Sciatic nerve (tissue), 2 donors: ENCODE measurements at regions of chr19 and their contacts with region 1.

Region 1: DNA sequence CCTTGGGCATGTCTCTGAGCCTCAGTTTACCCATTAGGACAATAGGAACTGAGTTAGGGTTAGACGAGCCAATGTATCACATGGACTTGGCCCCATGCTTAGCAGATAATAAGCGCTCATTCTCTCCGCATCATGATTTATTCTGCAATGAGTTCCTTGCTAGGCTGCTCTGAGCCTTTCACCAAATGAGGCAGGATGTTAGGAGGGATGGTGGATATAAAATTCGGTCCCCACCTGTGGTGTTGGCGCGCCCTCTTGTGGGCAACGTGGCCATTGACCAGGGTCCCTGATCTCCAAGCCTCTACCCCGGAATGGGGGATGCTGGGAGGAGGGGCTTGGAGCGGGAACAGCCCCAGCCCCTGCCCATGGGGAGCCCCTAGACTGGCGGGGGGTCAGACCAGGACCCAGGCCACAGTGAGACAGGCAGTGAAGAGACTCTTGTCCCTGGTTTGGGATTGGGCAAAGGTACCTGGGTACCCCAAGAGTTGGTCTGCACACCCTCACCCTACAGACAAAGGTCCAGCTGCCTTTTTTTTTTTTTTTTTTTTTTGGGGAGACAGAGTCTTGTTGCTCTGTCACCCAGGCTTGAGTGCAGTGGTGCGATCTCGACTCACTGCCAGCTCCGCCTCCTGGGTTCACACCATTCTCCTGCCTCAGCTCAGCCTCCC is 43.9 kb downstream of the CERS4 start:
- DNase-seq: peak; percentile 93
- ATAC-seq: peak; percentile 82

Region 2: DNA sequence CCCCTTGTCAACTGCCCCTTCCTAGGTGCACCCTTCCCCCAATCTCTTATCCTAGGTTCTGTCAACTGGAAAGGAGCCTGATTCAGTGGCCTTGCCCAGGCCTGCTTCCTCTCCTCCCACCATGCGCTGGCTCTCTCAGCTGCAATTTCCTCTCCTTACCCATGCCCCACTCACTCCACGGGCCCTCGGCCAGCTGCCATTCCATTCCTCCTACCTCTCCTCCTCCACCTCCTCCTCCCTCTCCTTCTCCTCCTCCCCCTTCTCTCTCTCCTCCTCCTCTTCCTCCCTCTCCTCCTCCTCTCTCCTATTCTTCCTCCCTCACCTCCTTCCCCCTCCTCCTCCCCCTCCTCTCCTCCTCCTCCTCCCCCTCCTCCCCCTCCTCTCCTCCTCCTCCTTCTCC is 300.0 kb before region 1 on chr19:
- intact Hi-C with region 1: loop called (anchors 10 kb)
- DNase-seq: no peak
- ATAC-seq: no peak

Region 3: GRCh38 chr19:8028951-8029491 is 224.0 kb before region 1 on chr19:
- intact Hi-C with region 1: no loop called
- DNase-seq: no peak
- ATAC-seq: peak; percentile 71

Region 4: DNA sequence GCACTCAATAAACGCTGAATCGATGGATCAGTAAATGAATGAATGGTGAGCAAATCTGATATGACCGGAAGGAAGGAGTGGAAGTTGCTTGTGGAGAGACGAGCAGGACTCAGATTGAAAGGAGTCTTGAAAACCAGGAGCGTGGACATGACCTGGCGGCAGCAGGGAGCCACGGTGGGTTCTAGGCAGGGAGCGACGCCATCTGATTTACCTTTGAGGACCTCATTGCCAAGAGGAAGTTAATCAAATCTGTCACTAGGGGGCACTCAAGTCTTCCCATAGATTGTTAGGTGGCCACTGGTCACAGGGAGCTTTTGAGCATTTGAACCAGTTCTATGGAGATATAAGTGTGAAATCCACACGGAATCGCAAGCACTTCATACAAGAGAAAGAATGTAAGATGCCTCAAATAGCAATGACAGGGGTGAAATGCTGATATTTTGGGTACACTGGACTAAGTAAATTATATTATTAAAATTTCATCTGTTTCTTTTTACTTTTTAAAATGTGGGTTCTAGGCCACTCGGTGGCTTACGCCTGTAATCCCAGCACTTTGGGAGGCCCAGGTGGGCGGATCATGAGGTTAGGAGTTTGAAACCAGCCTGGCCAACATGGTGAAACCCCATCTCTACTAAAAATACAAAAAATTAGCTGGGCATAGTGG is 94.5 kb before region 1 on chr19:
- intact Hi-C with region 1: loop called (anchors 5 kb)
- DNase-seq: no peak
- ATAC-seq: peak; percentile 57

Region 5: DNA sequence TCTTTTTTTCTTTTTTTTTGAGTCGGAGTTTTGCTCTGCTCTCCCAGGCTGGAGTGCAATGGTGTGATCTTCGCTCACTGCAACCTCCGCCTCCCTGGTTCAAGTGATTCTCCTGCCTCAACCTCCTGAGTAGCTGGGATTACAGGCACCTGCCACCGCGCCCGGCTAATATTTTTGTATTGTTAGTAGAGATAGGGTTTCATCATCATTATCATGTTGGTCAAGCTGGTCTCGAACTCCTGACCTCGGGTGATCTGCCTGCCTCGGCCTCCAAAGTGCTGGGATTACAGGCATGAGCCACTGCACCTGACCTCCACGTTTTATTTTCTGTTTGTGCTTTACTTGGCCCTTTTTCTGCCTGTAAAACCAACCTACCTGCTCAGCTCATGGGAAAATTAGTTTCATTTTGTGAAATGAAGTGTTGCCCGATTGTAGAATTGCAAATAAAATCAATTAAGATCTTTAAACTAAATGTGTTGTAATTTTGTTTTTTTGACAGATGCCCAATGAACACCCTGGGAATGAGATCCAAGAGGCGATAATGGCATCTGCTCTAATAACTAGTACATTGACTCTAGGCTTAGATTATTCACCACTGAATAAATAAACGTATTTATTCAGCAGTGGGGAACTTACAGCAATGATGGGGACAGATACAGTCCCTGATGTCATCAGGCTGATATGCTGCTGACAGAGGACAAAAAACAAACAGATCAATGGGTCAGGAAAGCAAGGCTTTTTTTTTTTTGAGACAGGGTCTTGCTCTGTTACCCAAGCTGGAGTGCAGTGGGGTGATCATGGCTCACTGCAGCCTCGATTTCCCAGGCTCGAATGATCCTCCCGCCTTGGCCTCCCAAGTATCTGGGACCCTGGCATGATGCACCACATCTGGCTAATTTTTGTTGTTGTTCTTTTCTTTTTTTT is 134.9 kb after region 1 on chr19:
- intact Hi-C with region 1: no loop called
- DNase-seq: no peak
- ATAC-seq: no peak